Psoas muscle (tissue), 8 donors: ENCODE measurements at regions of chr12 and their contacts with region 1.

Region 1: GRCh38 chr12:5083955-5084849 is 40.5 kb downstream of the KCNA5 start:
- DNase-seq: no peak
- ATAC-seq: peak in 3 of 4 donors; percentile 64 to 84 (median 72)
- H3K4me3 ChIP-seq: no peak overlapping the region
- H3K27ac ChIP-seq: no peak overlapping the region
- H3K4me1 ChIP-seq: no peaks in the 10 kb centered on the region
- H3K27me3 ChIP-seq: no peaks in the 10 kb centered on the region
- CTCF ChIP-seq: peak; percentile 75

Region 2: GRCh38 chr12:4849795-4850345 is 234.3 kb before region 1 on chr12:
- intact Hi-C with region 1: loop called in 1 of 2 experiments (anchors 5 kb)
- DNase-seq: no peak
- ATAC-seq: no peak
- H3K4me3 ChIP-seq: no peak overlapping the region
- H3K27ac ChIP-seq: no peak overlapping the region
- H3K4me1 ChIP-seq: no peaks in the 10 kb centered on the region
- H3K27me3 ChIP-seq: no peaks in the 10 kb centered on the region
- CTCF ChIP-seq: no peak

Region 3: DNA sequence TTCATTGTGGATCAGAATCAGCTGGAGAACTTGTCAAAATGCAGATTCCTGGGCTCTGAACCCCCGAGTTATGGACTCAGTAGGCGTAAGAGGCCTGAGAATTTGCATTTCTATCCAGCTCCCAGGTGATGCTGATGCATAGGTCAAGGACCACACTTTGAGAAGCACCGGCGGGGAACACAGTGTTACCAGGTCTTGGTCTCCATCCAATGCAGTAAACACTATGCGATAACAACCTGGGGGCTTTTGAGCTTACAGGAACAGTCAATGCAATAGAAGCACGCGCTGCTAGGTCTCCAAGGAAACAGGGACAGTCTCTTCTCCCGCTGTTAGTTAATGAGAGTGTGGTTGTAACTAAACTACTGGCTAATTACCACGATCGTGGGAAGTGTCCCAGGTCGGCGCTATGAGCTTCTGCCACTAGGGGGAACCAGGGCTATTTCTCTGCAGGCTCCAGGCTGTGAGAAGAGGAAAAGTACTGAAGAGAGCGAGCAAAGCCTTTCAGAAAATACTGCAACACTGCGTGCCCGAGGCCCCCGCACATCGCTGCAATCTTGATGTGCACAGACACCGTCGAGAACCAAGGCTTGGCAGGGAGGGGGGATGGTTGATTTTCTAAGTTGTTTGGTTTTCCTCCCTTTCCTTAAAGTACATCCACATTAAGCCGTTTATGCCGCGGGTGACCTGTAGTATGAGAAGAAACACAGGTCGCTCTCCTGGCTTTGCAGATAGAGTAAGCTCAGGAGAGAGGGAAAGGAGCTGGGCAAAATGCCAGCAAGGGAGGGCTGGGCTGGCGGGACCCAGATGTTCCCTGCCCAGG is 226.5 kb before region 1 on chr12:
- intact Hi-C with region 1: loop called (anchors 2 to 5 kb)
- DNase-seq: peak; percentile 68 to 74
- ATAC-seq: peak; percentile 78 to 90 (median 82)
- H3K4me3 ChIP-seq: peak overlapping the region; percentile 17
- H3K27ac ChIP-seq: no peak overlapping the region
- H3K4me1 ChIP-seq: peaks cover 10% of the 10 kb centered on the region
- H3K27me3 ChIP-seq: no peaks in the 10 kb centered on the region
- CTCF ChIP-seq: peak; percentile 79

Region 4: GRCh38 chr12:4960030-4960429 is 124.2 kb before region 1 on chr12:
- intact Hi-C with region 1: no loop called
- DNase-seq: no peak
- ATAC-seq: no peak
- H3K4me3 ChIP-seq: no peak overlapping the region
- H3K27ac ChIP-seq: no peak overlapping the region
- H3K4me1 ChIP-seq: no peaks in the 10 kb centered on the region
- H3K27me3 ChIP-seq: peaks cover 0 to 32% (median 0%) of the 10 kb centered on the region in 3 donors
- CTCF ChIP-seq: no peak

Region 5: DNA sequence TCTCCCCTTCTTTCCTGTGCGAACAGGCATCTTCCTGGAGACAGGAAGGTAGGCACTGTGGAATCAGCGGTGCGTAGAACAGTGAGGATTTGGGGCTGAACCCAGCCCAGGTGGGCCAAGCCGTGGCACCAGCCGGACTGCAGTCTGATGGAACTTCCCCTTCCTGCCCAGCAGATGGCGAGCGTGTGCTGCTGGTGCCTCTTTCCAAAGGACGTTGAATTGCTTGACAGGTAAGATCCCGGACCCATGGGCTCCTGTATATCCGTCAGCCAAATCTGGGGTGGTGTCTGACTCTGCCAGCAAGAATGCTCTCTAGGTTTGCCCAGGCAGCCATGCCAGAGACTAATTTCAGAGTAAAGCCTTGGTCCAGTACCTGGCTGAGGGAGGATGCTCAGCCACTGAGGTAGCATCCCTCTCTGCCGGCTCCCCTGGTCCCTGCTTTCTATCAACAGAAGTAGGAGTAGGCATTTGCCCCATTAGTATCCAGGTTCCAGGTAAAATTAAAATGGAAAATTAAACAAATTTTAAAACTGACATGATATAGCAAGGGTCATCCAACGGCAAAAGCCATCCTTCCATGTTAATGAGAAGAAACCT is 61.6 kb before region 1 on chr12:
- intact Hi-C with region 1: loop called (anchors 1 to 2 kb)
- DNase-seq: peak in 1 of 2 donors; percentile 66
- ATAC-seq: peak; percentile 65 to 82 (median 78)
- H3K4me3 ChIP-seq: no peak overlapping the region
- H3K27ac ChIP-seq: no peak overlapping the region
- H3K4me1 ChIP-seq: no peaks in the 10 kb centered on the region
- H3K27me3 ChIP-seq: no peaks in the 10 kb centered on the region
- CTCF ChIP-seq: peak; percentile 97